SK-N-SH (cell line): ENCODE measurements at regions of chr20 and their contacts with region 1.

Region 1: GRCh38 chr20:34768096-34768495 is 57.4 kb downstream of the NCOA6 start:
- DNase-seq: no peak
- H3K4me3 ChIP-seq: no peak overlapping the region
- H3K27ac ChIP-seq: no peak overlapping the region
- H3K4me1 ChIP-seq: peaks cover 2 to 7% of the 10 kb centered on the region in 2 experiments; a peak in 2 of 4 replicates
- H3K27me3 ChIP-seq: no peaks in the 10 kb centered on the region
- CTCF ChIP-seq: no peak
- EP300 ChIP-seq: no peak
- RAD21 ChIP-seq: no peak

Region 2: GRCh38 chr20:34485068-34485634 is 282.9 kb before region 1 on chr20:
- CTCF ChIA-PET with region 1: no interaction called
- POLR2A ChIA-PET with region 1: no interaction called
- DNase-seq: no peak
- H3K4me3 ChIP-seq: no peak overlapping the region
- H3K27ac ChIP-seq: no peak overlapping the region
- H3K4me1 ChIP-seq: no peaks in the 10 kb centered on the region
- H3K27me3 ChIP-seq: no peaks in the 10 kb centered on the region
- CTCF ChIP-seq: no peak
- EP300 ChIP-seq: no peak
- RAD21 ChIP-seq: no peak

Region 3: DNA sequence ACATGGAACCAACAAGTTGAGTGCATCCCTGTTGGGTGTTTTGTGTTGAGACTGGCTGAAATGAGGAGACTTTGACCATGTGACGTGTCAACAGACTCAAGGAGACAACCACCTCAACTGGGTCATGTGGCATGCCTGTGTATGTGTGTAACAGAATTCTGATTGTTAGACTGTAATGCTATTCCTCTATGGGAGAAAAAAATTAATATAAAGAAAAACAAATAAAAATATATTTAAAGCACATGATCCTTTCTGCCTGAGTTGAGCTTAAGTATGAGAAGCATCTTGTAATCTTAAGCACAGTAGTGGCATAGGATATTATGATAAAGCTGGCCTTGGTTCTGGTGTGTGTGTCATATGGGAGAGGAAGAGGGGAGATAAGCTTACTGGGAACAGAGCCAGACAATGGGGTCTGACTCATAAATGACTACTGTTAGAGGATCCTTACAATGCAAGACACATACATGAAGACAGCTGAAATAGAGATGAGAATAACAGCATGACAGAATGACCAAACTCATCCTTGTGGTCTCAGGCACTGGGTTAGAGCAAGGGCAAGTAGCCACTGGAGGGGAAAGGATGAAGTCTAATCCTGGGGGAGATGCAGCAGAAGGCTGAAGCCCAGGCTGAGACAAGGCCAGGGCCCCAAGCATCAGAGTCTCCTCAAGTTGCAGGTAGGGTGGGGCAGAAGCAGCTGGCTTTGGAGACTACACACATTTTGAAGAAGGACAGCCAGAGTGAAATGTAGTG is 54.7 kb before region 1 on chr20:
- CTCF ChIA-PET with region 1: interaction called, 10 read pairs
- POLR2A ChIA-PET with region 1: no interaction called
- DNase-seq: peak; percentile 71
- H3K4me3 ChIP-seq: no peak overlapping the region
- H3K27ac ChIP-seq: peak overlapping the region; percentile 69 to 82
- H3K4me1 ChIP-seq: peaks cover 16 to 20% of the 10 kb centered on the region in 2 experiments; a peak in 3 of 4 replicates
- H3K27me3 ChIP-seq: no peaks in the 10 kb centered on the region
- CTCF ChIP-seq: no peak
- EP300 ChIP-seq: no peak; a peak in 1 of 4 replicates
- RAD21 ChIP-seq: 0 out of 2 replicates have a peak, but pooled peaks have one; percentile 11

Region 4: GRCh38 chr20:34732523-34732922 is 35.6 kb before region 1 on chr20:
- CTCF ChIA-PET with region 1: interaction called, 14 read pairs
- POLR2A ChIA-PET with region 1: no interaction called
- DNase-seq: no peak
- H3K4me3 ChIP-seq: no peak overlapping the region
- H3K27ac ChIP-seq: no peak overlapping the region
- H3K4me1 ChIP-seq: peaks cover 0 to 5% of the 10 kb centered on the region in 2 experiments; a peak in 1 of 4 replicates
- H3K27me3 ChIP-seq: no peaks in the 10 kb centered on the region
- CTCF ChIP-seq: no peak
- EP300 ChIP-seq: no peak
- RAD21 ChIP-seq: no peak

Region 5: GRCh38 chr20:34747479-34747878 is 20.6 kb before region 1 on chr20:
- CTCF ChIA-PET with region 1: interaction called, 14 read pairs
- POLR2A ChIA-PET with region 1: no interaction called
- DNase-seq: no peak
- H3K4me3 ChIP-seq: no peak overlapping the region
- H3K27ac ChIP-seq: no peak overlapping the region
- H3K4me1 ChIP-seq: no peaks in the 10 kb centered on the region
- H3K27me3 ChIP-seq: no peaks in the 10 kb centered on the region
- CTCF ChIP-seq: no peak
- EP300 ChIP-seq: no peak
- RAD21 ChIP-seq: no peak

Region 6: GRCh38 chr20:34753706-34754461 is 14.2 kb before region 1 on chr20:
- CTCF ChIA-PET with region 1: interaction called, 58 read pairs
- POLR2A ChIA-PET with region 1: no interaction called
- DNase-seq: no peak
- H3K4me3 ChIP-seq: no peak overlapping the region
- H3K27ac ChIP-seq: no peak overlapping the region
- H3K4me1 ChIP-seq: no peaks in the 10 kb centered on the region
- H3K27me3 ChIP-seq: no peaks in the 10 kb centered on the region
- CTCF ChIP-seq: no peak; the same call in 1 of the 2 replicates
- EP300 ChIP-seq: no peak
- RAD21 ChIP-seq: no peak

Region 7: GRCh38 chr20:34781220-34781619 is 13.1 kb after region 1 on chr20:
- CTCF ChIA-PET with region 1: interaction called, 51 read pairs
- POLR2A ChIA-PET with region 1: no interaction called
- DNase-seq: peak; percentile 8
- H3K4me3 ChIP-seq: no peak overlapping the region
- H3K27ac ChIP-seq: no peak overlapping the region
- H3K4me1 ChIP-seq: peaks cover 0 to 4% of the 10 kb centered on the region in 2 experiments; a peak in 1 of 4 replicates
- H3K27me3 ChIP-seq: no peaks in the 10 kb centered on the region
- CTCF ChIP-seq: no peak
- EP300 ChIP-seq: no peak
- RAD21 ChIP-seq: no peak

Region 8: DNA sequence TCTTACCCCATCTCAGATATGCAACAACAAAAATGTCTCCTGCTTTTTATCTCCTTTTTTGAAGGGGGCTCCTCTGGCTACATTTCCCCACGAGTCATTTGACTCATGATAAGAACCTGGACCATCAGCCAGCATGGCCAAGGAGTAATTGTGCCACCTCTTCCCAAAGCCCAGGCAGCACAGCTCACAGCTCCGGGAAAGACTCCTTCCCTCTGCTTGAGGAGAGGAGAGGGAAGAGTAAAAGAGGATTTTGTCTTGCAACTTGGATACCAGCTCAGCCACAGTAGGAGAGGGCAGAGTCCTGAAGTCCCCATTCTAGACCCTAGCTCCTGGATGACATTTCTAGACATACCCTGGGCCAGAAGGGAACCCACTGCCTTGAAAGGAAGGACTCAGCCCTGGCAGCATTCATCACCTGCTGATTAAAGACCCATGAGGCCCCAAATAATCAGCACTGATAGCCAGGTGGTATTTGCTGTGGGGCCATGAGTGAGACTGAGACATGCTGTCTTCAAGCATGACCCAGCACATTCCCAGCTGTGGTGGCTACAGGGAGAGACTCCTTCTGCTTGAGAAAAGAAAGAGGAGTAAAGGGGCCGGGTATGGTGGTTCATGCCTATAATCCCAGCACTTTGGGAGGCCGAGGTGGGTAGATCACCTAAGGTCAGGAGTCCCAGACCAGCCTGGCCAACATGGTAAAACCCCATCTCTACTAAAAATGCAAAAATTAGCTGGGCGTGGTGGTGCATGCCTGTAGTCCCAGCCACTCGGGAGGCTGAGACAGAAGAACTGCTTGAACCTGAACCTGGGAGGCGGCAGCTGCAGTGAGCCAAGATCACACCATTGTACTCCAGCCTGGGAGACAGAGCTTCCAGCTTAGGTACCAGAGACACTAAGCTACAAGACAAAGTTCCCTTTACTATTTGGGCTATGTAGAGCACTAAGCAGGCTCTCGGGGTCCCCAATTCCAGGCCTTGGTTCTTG is 29.2 kb after region 1 on chr20:
- CTCF ChIA-PET with region 1: interaction called, 14 read pairs
- POLR2A ChIA-PET with region 1: no interaction called
- DNase-seq: no peak
- H3K4me3 ChIP-seq: no peak overlapping the region
- H3K27ac ChIP-seq: no peak overlapping the region
- H3K4me1 ChIP-seq: peaks cover 0 to 8% of the 10 kb centered on the region in 2 experiments; a peak in 1 of 4 replicates
- H3K27me3 ChIP-seq: no peaks in the 10 kb centered on the region
- CTCF ChIP-seq: no peak
- EP300 ChIP-seq: no peak
- RAD21 ChIP-seq: no peak